Activated B cell treated with CpG ODN at 0.5 μM for 24 hours (primary cell): ENCODE measurements at regions of chr12 and their contacts with region 1.

Region 1: DNA sequence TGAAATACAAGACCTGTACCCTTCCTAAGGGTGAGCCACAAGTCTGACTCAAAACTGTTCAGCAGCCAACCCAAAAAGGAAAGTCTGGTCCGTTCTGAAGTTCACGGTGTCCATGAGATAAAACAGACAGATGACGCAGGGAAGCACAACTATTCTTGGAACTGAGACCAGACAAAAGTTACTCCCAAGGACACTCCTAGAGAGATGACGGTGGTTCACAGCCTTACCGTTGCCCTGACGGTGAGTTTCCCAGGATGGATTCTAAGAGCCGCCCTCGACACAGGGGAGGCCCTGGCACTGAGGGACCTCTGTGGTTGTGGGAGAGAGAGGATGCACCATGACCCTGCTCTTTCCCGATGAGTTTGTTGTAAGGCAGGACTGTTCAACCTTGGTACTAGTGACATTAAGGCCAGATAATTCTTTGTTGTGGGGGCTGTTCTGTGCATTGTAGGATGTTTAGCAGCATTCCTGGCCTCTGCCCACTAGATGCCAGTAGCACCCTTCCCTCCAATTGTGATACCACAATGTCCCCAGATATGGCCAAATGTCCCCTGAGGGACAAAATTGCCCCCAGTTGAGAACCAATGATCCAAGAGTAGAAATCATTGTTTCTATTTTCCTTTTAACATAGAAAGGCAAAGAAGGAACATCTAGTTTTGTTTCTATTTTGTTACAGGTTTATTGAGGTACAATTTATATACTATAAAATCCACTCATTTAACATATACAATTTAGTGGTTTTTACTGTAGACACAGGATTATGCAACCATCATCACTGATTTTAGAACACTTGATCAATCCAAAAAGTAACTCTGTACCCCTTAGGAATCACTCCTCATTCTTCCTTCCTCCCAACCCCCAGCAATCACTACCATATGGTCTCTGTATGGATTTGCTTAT is 23.0 kb downstream of the OR10P1 start:
- DNase-seq: no peak
- ATAC-seq: peak; percentile 60
- H3K4me3 Mint-ChIP-seq: no peak overlapping the region
- H3K27ac Mint-ChIP-seq: no peak overlapping the region
- H3K4me1 Mint-ChIP-seq: peaks cover 3% of the 10 kb centered on the region
- H3K27me3 Mint-ChIP-seq: no peaks in the 10 kb centered on the region
- CTCF ChIP-seq: no peak

Region 2: GRCh38 chr12:54993161-54993835 is 666.4 kb before region 1 on chr12:
- CTCF ChIA-PET with region 1: no interaction called
- POLR2A ChIA-PET with region 1: interaction called, 3 read pairs
- intact Hi-C with region 1: loop called (anchors 5 kb)
- DNase-seq: no peak
- ATAC-seq: peak; percentile 68
- H3K4me3 Mint-ChIP-seq: no peak overlapping the region
- H3K27ac Mint-ChIP-seq: no peak overlapping the region
- H3K4me1 Mint-ChIP-seq: peaks cover 43% of the 10 kb centered on the region
- H3K27me3 Mint-ChIP-seq: no peaks in the 10 kb centered on the region
- CTCF ChIP-seq: peak; percentile 75

Region 3: DNA sequence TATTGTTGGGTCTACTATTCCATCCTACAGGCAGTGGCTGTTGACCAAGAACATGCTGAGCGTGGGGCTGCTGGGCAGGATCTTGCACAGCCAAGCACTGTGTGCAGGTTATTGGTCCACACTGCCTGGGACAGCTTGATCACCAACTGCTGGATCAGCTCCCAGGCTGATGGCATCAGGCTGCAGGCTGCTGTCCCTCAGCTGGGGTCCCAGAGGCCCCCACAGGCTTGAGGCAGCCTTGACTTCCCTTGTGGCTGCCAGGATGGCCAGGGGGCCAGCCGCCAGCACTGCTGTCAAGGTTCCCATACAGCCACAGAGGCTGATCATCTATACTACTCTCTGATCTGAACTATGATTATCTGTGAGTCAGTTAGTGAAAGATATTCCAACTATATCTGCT is 77.7 kb before region 1 on chr12:
- CTCF ChIA-PET with region 1: no interaction called
- POLR2A ChIA-PET with region 1: no interaction called
- intact Hi-C with region 1: no loop called
- DNase-seq: no peak
- ATAC-seq: no peak
- H3K4me3 Mint-ChIP-seq: no peak overlapping the region
- H3K27ac Mint-ChIP-seq: no peak overlapping the region
- H3K4me1 Mint-ChIP-seq: no peaks in the 10 kb centered on the region
- H3K27me3 Mint-ChIP-seq: peaks cover 29% of the 10 kb centered on the region
- CTCF ChIP-seq: no peak

Region 4: GRCh38 chr12:55619354-55620138 is 40.2 kb before region 1 on chr12:
- CTCF ChIA-PET with region 1: interaction called, 8 read pairs
- POLR2A ChIA-PET with region 1: no interaction called
- intact Hi-C with region 1: loop called (anchors 1 kb)
- DNase-seq: no peak
- ATAC-seq: peak; percentile 87
- H3K4me3 Mint-ChIP-seq: no peak overlapping the region
- H3K27ac Mint-ChIP-seq: no peak overlapping the region
- H3K4me1 Mint-ChIP-seq: no peaks in the 10 kb centered on the region
- H3K27me3 Mint-ChIP-seq: peaks cover 13% of the 10 kb centered on the region
- CTCF ChIP-seq: no peak

Region 5: GRCh38 chr12:55673638-55674037 is 13.9 kb after region 1 on chr12:
- CTCF ChIA-PET with region 1: interaction called, 12 read pairs
- POLR2A ChIA-PET with region 1: interaction called, 7 read pairs
- intact Hi-C with region 1: no loop called
- DNase-seq: no peak
- ATAC-seq: peak; percentile 99
- H3K4me3 Mint-ChIP-seq: peak overlapping the region; percentile 21
- H3K27ac Mint-ChIP-seq: peak overlapping the region; percentile 90
- H3K4me1 Mint-ChIP-seq: peaks cover 28% of the 10 kb centered on the region
- H3K27me3 Mint-ChIP-seq: no peaks in the 10 kb centered on the region
- CTCF ChIP-seq: no peak

Region 6: DNA sequence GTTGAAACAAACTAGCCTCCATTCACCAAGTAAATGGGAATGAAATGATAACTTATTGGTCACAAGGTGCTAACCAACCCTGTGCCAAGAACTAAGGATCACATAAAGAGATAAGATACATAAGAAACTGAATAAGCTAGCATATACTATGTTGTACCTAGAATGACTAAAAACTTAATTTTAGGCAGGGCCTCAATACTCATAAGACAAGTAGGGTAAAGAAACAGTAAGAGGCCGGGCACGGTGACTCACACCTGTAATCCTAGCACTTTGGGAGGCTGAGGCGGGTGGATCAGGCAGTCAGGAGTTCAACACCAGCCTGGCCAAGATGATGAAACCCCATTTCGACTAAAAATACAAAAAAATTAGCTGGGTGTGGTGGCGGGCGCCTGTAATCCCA is 100.9 kb after region 1 on chr12:
- CTCF ChIA-PET with region 1: no interaction called
- POLR2A ChIA-PET with region 1: no interaction called
- intact Hi-C with region 1: no loop called
- DNase-seq: no peak
- ATAC-seq: no peak
- H3K4me3 Mint-ChIP-seq: no peak overlapping the region
- H3K27ac Mint-ChIP-seq: no peak overlapping the region
- H3K4me1 Mint-ChIP-seq: no peaks in the 10 kb centered on the region
- H3K27me3 Mint-ChIP-seq: no peaks in the 10 kb centered on the region
- CTCF ChIP-seq: no peak

Region 7: DNA sequence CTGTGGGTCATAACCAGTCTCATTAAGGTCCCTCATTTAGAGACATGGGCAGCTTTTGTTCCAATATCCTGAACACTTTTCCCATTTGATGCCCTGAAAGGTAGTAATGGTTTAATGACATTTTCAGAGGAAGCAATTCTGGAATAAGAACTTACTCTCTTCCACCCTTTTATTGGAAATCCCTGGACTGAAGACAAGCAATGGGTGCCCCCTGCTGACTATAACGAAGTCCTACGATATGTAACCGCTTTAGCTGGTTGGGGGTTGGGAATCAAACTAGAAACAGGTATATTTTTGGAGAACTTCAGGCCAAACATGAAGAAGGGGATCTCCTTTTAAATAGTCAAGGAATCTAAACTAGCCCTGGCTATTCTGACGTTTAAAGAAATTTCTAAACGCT is 137.3 kb after region 1 on chr12:
- CTCF ChIA-PET with region 1: no interaction called
- POLR2A ChIA-PET with region 1: no interaction called
- intact Hi-C with region 1: loop called (anchors 5 kb)
- DNase-seq: no peak
- ATAC-seq: no peak
- H3K4me3 Mint-ChIP-seq: no peak overlapping the region
- H3K27ac Mint-ChIP-seq: no peak overlapping the region
- H3K4me1 Mint-ChIP-seq: peaks cover 1% of the 10 kb centered on the region
- H3K27me3 Mint-ChIP-seq: no peaks in the 10 kb centered on the region
- CTCF ChIP-seq: no peak